Head of caudate nucleus (tissue), 42 donors: ENCODE measurements at regions of chr12 and their contacts with region 1.

Region 1: GRCh38 chr12:751192-751998 is 984 bp upstream of the WNK1 start:
- DNase-seq: peak; percentile 85 to 98 (median 92)

Region 2: GRCh38 chr12:575948-576612 is 175.3 kb before region 1 on chr12:
- intact Hi-C with region 1: loop called (anchors 2 kb)
- DNase-seq: peak; percentile 46 to 92 (median 82)

Region 3: GRCh38 chr12:642633-643474 is 108.5 kb before region 1 on chr12:
- intact Hi-C with region 1: loop called (anchors 5 kb)
- DNase-seq: peak in 40 of 42 donors; percentile 44 to 87 (median 72)

Region 4: DNA sequence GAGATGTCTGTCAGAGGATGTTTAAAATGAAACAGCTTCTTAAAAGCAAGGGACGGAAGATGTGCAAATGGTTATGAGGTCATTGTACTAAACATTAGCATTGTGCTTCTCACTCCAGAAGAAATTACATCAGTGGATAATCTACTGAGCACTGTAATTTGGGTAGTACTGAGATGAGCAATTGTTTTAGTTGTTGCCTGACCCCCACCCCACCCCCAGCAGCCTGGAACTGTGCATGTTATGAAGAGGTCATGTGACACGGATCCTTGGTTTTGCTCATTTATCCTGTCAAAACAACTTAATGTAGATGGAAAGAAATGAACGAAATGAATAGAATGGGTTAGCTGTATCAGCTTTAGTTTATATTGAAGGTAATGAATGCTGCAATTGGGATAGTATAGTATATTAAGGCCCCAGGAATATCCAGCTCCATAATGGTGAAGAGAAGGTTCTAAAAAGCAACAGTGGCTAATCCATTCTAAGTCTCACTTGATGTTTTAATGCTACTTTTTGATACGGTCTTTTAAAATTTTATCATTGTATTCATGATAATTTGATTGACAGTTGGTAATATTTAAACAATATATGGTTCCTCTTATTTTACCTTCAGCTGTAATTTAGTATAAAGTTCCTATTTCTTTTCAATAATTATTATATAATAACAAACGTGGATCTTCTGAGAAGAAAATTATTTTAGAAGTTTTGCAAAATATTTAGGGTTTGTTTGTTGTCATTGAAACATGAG is 59.4 kb after region 1 on chr12:
- intact Hi-C with region 1: loop called (anchors 5 kb)
- DNase-seq: peak in 4 of 42 donors; percentile 12 to 60 (median 36)

Region 5: GRCh38 chr12:905261-906031 is 154.1 kb after region 1 on chr12:
- intact Hi-C with region 1: no loop called
- DNase-seq: no peak

Region 6: DNA sequence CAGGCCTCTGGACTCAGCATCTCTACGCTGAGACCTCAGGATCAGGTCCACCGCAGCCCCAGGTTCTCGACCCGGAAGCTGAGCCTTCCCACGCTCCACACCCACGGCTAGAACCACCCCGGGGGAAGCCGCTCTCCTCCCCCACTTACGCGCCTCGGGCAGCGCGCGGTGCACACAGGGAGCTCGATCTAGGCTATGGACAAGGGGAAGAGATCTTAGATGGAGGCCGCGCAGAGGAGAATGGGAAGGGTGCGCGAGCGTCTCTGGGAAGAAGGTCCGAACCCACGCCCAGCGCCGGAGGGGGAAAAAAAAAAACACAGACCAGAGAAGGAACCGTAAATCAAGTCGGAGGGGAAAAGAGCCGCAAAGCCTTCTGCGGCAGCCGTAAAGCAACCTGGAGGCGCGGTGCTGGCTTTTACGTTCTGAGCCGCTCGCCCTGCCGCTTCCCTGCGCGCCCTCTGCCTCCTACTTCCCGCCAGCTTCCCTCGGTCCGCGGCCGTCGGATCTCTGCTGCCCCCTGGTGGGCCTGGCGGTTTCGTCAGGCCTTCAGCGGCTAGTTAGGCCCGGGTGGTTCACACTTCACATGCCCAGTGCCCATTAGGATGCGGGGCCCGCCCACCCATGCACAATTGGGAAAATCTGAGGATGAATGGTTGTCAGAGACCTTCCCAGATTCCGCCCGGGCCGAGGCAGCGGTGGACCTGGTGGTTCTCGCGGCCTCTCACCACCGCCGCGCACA is 198.2 kb after region 1 on chr12 and contains the start of gene RAD52:
- intact Hi-C with region 1: loop called (anchors 5 kb)
- DNase-seq: peak; percentile 93 to 99 (median 98)